ENCODE measurements at regions of chr22 and their contacts with region 1.

Region 1: DNA sequence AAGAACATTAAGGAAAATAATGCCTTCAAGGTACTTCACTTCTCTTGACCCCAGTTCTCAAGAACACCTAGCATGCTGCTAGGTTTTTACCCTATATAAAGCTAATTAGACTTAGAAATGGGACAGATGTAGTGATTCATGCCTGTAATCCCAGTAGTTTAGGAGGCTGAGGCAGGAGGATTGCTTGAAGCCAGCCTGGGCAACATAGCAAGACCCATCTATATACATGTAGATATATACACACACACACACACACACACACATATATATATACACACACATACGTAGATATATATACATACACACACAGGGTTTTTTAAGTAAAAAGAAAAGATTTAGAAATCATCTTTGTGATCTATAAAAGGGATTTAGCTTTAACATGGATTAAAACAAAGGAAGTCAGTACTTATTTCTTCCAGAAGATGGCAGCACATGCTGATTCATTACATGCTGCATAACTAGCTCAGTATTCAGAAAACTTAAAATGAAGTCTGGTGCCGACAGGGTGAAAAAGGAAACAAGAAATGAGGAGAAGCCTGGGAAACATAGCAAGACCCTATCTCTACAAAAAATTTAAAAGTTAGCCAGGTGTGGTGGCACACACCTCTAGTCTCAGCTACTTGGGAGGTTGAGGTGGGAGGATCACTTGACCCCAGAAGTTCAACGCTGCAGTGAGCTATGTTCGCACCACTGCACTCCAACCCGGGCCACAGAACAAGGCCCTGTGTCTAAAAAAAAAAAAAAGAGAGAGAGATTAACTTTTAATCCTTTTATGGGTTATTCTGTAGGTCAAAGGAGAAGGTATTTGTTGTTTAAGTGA is 28.5 kb upstream of the RBX1 start:
- DNase-seq: peak; percentile 41
- H3K4me3 ChIP-seq: no peak overlapping the region
- H3K27ac ChIP-seq: no peak overlapping the region
- H3K27me3 ChIP-seq: no peaks in the 10 kb centered on the region
- CTCF ChIP-seq: peak; percentile 66

Region 2: DNA sequence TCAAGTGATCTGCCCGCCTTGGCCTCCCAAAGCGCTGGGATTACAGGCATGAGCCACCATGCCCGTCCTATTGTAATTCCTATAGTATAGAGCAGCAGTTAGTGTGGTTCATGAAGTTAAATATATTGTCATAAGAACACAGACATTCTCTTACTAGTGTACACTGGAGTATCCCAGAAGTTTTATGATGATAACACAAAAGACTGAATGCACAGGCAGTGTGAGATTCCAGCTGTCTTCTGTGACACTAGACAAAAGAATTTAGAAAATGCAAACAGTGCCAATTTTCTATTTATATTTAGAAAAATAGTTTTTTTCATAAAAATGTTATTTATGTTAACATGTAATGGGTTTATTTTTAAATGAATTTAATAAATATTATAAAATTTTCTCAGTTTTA is 10.9 kb before region 1 on chr22:
- CTCF ChIA-PET with region 1: interaction called, 19 read pairs
- POLR2A ChIA-PET with region 1: no interaction called
- DNase-seq: no peak
- H3K4me3 ChIP-seq: no peak overlapping the region
- H3K27ac ChIP-seq: no peak overlapping the region
- H3K27me3 ChIP-seq: no peaks in the 10 kb centered on the region
- CTCF ChIP-seq: no peak

Region 3: GRCh38 chr22:41078931-41079330 is 156.2 kb after region 1 on chr22:
- CTCF ChIA-PET with region 1: no interaction called
- POLR2A ChIA-PET with region 1: no interaction called
- DNase-seq: no peak
- H3K4me3 ChIP-seq: no peak overlapping the region
- H3K27ac ChIP-seq: no peak overlapping the region
- H3K27me3 ChIP-seq: peaks cover 10% of the 10 kb centered on the region
- CTCF ChIP-seq: no peak

Region 4: DNA sequence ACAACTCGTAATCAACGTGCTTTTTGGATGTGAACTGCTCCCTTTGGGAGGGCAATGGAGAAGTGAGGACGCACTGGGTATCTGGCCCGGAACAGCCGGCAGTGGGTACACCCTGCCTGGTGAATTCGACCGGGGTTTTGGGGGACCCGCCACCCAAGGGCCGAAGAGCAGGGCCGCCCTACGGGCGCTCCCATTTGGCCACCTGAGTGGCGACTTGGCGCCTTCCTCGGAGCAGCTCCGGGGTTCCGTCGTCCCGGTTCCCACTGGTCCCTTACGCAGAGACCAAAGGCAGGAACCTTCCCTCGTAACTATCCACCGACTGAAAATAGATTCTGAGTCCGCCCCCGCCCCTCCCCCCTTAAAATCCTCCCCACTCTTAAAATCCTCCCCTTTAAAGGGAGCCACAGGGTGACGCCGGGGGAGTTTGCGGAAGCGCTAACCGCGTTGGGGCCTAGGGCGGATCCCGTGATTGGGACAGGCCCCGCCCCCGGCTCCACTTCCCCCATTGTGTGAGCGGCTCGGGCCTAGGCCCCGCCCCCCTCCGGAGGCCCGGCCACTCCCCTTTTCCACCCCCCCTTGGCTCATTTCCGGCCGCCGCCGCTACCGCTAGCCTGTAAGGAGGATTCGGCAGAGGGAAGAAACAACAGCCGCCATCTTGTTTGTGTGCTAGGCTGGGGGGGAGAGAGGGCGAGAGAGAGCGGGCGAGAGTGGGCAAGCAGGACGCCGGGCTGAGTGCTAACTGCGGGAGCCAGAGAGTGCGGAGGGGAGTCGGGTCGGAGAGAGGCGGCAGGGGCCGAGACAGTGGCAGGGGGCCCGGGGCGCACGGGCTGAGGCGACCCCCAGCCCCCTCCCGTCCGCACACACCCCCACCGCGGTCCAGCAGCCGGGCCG is 168.7 kb after region 1 on chr22:
- CTCF ChIA-PET with region 1: interaction called, 25 read pairs
- POLR2A ChIA-PET with region 1: no interaction called
- DNase-seq: peak; percentile 98
- H3K4me3 ChIP-seq: peak overlapping the region; percentile 85
- H3K27ac ChIP-seq: peak overlapping the region; percentile 99
- H3K27me3 ChIP-seq: no peaks in the 10 kb centered on the region
- CTCF ChIP-seq: no peak

Region 5: GRCh38 chr22:41128606-41129005 is 205.9 kb after region 1 on chr22:
- CTCF ChIA-PET with region 1: interaction called, 15 read pairs
- POLR2A ChIA-PET with region 1: interaction called, 3 read pairs
- DNase-seq: no peak
- H3K4me3 ChIP-seq: no peak overlapping the region
- H3K27ac ChIP-seq: no peak overlapping the region
- H3K27me3 ChIP-seq: no peaks in the 10 kb centered on the region
- CTCF ChIP-seq: no peak

Measured in AG04450 (cell line).